CD14-positive monocyte (primary cell): ENCODE measurements at regions of chr3 and their contacts with region 1.

Region 1: GRCh38 chr3:127275287-127275781 is 12.5 kb downstream of the PRR20G start:
- DNase-seq: no peak
- H3K4me3 ChIP-seq: no peak overlapping the region
- H3K4me3 Mint-ChIP-seq: no peak overlapping the region
- H3K27ac ChIP-seq: no peak overlapping the region
- H3K27ac Mint-ChIP-seq: no peak overlapping the region
- H3K4me1 ChIP-seq: no peaks in the 10 kb centered on the region
- H3K4me1 Mint-ChIP-seq: no peaks in the 10 kb centered on the region
- H3K27me3 ChIP-seq: no peaks in the 10 kb centered on the region
- H3K27me3 Mint-ChIP-seq: peaks cover 0 to 10% (median 7%) of the 10 kb centered on the region in 3 donors
- CTCF ChIP-seq: no peak

Region 2: DNA sequence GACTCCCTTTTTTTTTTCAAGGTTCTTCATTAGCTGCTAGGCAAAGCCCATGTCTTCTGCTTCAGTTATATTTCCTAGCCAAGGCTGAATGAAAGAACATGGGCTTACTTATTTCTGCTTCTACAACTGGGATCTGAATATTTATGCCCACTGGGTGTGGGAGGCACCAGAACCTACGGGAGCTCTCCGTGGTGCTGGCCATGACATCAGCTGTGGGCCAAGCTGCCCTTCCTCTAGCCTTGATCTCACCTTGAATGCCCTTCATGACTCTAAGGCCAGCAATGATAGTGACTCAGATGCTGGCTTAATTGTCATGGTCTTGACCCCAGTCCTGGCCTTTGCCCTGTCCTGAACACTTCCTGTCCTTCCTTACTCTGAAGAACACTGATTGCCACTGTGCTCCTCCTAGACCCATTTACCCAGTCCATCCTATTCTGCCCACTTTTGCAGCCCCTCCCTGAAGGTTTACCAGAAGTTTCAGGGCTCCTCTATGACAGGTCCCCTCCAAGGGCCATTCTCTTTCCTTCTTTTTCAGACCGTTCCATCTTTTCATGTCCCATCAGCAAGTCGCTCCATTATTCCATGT is 45.3 kb after region 1 on chr3:
- intact Hi-C with region 1: loop called in 1 of 2 experiments (anchors 10 kb)
- DNase-seq: no peak
- H3K4me3 ChIP-seq: no peak overlapping the region
- H3K4me3 Mint-ChIP-seq: no peak overlapping the region
- H3K27ac ChIP-seq: no peak overlapping the region
- H3K27ac Mint-ChIP-seq: no peak overlapping the region
- H3K4me1 ChIP-seq: peaks cover 18 to 19% of the 10 kb centered on the region in 2 donors
- H3K4me1 Mint-ChIP-seq: peaks cover 21% of the 10 kb centered on the region
- H3K27me3 ChIP-seq: no peaks in the 10 kb centered on the region
- H3K27me3 Mint-ChIP-seq: peaks cover 6 to 13% (median 9%) of the 10 kb centered on the region in 3 donors
- CTCF ChIP-seq: no peak

Region 3: GRCh38 chr3:127915115-127915936 is 640.0 kb after region 1 on chr3 and contains the start of gene KBTBD12:
- intact Hi-C with region 1: no loop called
- DNase-seq: no peak
- H3K4me3 ChIP-seq: peak within 1 kb of the TSS in 2 of 3 experiments; percentile 5 to 54
- H3K4me3 Mint-ChIP-seq: peak within 1 kb of the TSS; percentile 62 to 89
- H3K27ac ChIP-seq: no peak within 1 kb of the TSS
- H3K27ac Mint-ChIP-seq: peak within 1 kb of the TSS in 1 of 7 donors; percentile 70
- H3K4me1 ChIP-seq: peaks cover 17 to 34% of the 10 kb centered on the region in 2 donors
- H3K4me1 Mint-ChIP-seq: peaks cover 36% of the 10 kb centered on the region
- H3K27me3 ChIP-seq: peaks cover 31 to 41% of the 10 kb centered on the region in 2 donors
- H3K27me3 Mint-ChIP-seq: peaks cover 48 to 60% (median 54%) of the 10 kb centered on the region in 3 donors
- CTCF ChIP-seq: no peak
- polyA plus RNA-seq, gene KBTBD12: not detected